Activated T-helper 2 cell treated with anti-CD3 and anti-CD28 coated beads, Interferon-gamma antibody, Interleukin-2, Interleukin-4, amounts not matched to agents 10 μg/mL and 5 μg/mL and 100 μg/mL, durations not matched to agents 14 hours and 24 hours and 36 hours (primary cell): ENCODE measurements at regions of chr6 and their contacts with region 1.

Region 1: DNA sequence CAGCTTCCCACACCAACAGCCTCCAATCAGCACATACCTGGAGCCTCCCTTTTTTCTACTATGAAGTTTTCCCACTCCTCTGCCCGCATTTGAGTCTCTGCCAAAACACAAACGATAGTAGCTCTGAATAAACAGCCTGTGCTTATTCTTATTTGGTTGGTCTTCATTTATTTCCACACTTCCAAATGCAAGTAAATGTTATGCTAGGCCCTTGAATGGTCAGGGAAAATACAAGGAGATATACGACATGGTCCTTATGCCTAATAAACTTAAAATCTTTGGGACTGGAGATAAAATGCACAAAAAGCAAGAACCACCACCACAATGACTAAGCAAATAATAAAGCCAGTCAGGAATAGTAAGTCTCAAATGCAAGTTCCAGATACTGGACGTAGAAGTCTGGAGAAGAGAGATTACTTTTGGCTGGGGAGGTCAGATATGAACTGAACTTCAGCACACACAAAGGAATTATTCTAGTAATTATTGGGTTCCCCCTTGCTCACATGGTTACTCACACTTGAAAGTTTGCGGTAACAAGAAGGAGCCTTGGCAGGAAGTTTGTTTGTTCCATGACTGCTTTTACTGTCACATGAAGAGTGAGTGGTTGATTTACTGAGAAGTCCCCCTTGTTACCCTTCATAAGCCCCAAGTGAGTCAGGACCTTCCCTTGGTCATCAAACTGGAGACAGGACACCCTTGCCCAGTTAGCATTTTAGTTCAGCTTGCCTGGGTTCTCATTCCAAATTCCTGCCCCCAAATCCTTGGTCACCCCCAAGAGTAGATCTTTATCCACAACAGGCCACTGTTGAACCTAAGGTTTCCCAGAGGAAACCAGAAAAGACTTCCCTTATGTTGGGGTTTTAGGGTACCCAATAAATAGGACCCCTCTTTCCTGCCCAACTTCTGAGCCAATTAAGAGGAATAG is 511.2 kb upstream of the JARID2 start:
- DNase-seq: peak; percentile 35
- H3K4me3 Mint-ChIP-seq: peak overlapping the region; percentile 62
- H3K27ac Mint-ChIP-seq: peak overlapping the region; percentile 96
- H3K4me1 Mint-ChIP-seq: peaks cover 96% of the 10 kb centered on the region
- H3K27me3 Mint-ChIP-seq: no peaks in the 10 kb centered on the region

Region 2: DNA sequence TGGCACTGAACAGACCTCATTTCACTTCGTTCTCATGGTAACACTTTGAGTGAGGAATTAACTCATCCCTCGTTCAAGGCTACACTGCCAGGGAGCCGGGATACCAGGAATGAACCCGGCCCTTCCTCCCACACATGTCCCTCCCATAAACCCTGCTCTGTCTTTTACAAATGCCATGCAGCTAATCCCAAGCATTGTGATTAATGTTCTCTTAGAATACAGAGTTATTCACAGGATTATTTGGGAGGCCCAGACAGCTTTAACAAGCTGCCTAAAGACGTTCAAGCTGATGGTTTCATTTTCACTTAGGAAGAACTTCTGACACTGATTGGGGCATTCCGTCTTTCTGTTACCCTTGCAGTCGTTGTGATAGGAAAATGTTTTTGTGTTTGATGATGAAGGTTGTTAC is 659.6 kb before region 1 on chr6:
- intact Hi-C with region 1: loop called (anchors 10 kb)
- DNase-seq: no peak
- H3K4me3 Mint-ChIP-seq: peak overlapping the region; percentile 82
- H3K27ac Mint-ChIP-seq: peak overlapping the region; percentile 95
- H3K4me1 Mint-ChIP-seq: peaks cover 58% of the 10 kb centered on the region
- H3K27me3 Mint-ChIP-seq: no peaks in the 10 kb centered on the region

Region 3: GRCh38 chr6:14423330-14423729 is 311.3 kb before region 1 on chr6:
- intact Hi-C with region 1: loop called (anchors 1 kb)
- DNase-seq: no peak
- H3K4me3 Mint-ChIP-seq: no peak overlapping the region
- H3K27ac Mint-ChIP-seq: peak overlapping the region; percentile 78
- H3K4me1 Mint-ChIP-seq: peaks cover 42% of the 10 kb centered on the region
- H3K27me3 Mint-ChIP-seq: no peaks in the 10 kb centered on the region

Region 4: DNA sequence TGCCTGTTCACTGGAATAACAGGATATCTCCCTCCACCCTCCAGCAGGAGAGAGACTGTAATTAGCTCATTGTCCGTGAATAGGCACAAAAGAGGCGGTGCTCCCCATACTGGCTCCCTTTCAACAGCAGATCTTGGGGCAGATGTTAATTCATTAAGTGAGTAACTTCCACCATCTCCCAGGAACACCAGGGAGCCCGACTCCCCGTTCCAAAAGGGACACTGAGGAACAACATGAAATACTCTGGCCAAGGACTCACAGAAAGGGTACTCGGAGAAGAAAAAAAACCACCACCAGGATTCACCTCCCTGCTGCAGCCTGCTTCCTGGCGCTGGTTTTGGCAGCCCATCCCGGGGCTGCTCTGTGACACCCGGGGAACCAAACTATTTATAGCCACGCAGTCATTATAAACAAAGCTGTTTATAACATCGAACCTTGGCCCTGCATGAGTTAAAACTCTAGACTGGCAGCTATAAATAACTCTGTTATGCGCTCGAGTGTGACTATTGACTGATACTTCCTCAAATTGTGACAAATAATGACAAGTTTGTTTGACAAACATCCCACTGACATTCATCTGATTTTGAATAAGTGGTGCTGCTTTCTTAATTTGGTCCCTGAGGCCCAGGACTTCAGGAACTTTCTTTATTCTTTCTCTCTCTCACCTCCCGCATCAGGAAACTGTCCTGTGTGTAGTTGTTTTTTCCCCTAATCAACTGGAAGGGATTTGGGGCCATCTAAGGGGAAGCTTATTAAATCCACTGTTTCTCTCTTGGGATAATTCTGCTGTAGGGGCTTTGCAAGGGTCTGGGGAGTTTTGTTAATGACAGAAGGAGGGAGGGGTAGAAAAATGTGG is 95.5 kb before region 1 on chr6:
- intact Hi-C with region 1: loop called (anchors 5 kb)
- DNase-seq: no peak
- H3K4me3 Mint-ChIP-seq: no peak overlapping the region
- H3K27ac Mint-ChIP-seq: no peak overlapping the region
- H3K4me1 Mint-ChIP-seq: peaks cover 74% of the 10 kb centered on the region
- H3K27me3 Mint-ChIP-seq: peaks cover 3% of the 10 kb centered on the region

Region 5: GRCh38 chr6:14711056-14711703 is 23.5 kb before region 1 on chr6:
- intact Hi-C with region 1: loop called (anchors 1 kb)
- DNase-seq: peak; percentile 63
- H3K4me3 Mint-ChIP-seq: peak overlapping the region; percentile 75
- H3K27ac Mint-ChIP-seq: peak overlapping the region; percentile 99
- H3K4me1 Mint-ChIP-seq: peaks cover 60% of the 10 kb centered on the region
- H3K27me3 Mint-ChIP-seq: no peaks in the 10 kb centered on the region

Region 6: GRCh38 chr6:15184441-15184861 is 449.8 kb after region 1 on chr6:
- intact Hi-C with region 1: loop called (anchors 1 kb)
- DNase-seq: no peak
- H3K4me3 Mint-ChIP-seq: no peak overlapping the region
- H3K27ac Mint-ChIP-seq: peak overlapping the region; percentile 90
- H3K4me1 Mint-ChIP-seq: peaks cover 12% of the 10 kb centered on the region
- H3K27me3 Mint-ChIP-seq: no peaks in the 10 kb centered on the region

Region 7: DNA sequence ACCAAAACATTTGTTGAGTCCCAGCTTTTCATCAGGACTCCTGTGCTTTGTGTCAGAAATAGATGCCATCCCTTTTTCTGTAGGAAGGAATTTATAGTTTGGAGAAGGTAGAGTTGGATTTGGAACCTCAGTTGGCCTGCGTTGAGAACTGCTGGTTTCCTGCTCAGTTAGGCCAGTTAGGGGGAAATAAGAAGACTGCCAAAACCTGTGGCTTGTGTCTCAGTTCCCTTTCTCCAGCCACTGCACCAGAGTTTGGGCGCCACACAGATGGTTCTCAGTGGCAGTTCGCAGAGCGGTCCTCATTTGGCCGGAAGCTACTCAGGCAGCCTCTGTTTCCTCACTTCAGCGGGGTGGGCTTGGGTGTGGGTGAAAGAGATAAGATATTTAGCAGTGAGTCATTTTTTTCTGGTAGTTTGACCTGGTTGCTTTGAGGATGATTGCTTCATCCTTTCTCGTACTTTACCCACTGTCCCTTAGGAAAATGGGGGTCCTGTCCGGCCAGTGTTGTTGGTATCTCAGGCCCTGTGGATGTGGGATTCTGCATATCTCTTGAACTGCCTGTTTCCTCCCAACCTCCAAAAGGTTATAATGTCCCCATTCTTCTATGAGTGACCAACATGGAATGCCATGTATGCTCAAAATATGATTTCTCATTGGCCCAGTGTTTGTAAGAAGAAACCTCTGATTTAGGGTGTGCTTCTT is 564.9 kb after region 1 on chr6:
- intact Hi-C with region 1: loop called (anchors 5 kb)
- DNase-seq: peak; percentile 46
- H3K4me3 Mint-ChIP-seq: peak overlapping the region; percentile 53
- H3K27ac Mint-ChIP-seq: peak overlapping the region; percentile 68
- H3K4me1 Mint-ChIP-seq: peaks cover 74% of the 10 kb centered on the region
- H3K27me3 Mint-ChIP-seq: no peaks in the 10 kb centered on the region